Gastrocnemius medialis (tissue), 4 donors: ENCODE measurements at regions of chr20 and their contacts with region 1.

Region 1: GRCh38 chr20:23920417-23921325 is 41.1 kb upstream of the CST5 start:
- DNase-seq: no peak
- ATAC-seq: no peak
- H3K4me3 ChIP-seq: no peak overlapping the region
- H3K27ac ChIP-seq: no peak overlapping the region
- H3K4me1 ChIP-seq: no peaks in the 10 kb centered on the region
- H3K27me3 ChIP-seq: peaks cover 0 to 2% (median 0%) of the 10 kb centered on the region in 3 donors
- CTCF ChIP-seq: no peak
- POLR2A ChIP-seq: no peak

Region 2: GRCh38 chr20:23721962-23722361 is 198.7 kb before region 1 on chr20:
- in situ Hi-C with region 1: no loop called
- intact Hi-C with region 1: no loop called
- DNase-seq: no peak
- ATAC-seq: no peak
- H3K4me3 ChIP-seq: no peak overlapping the region
- H3K27ac ChIP-seq: no peak overlapping the region
- H3K4me1 ChIP-seq: no peaks in the 10 kb centered on the region
- H3K27me3 ChIP-seq: no peaks in the 10 kb centered on the region
- CTCF ChIP-seq: no peak
- POLR2A ChIP-seq: no peak

Region 3: GRCh38 chr20:23937303-23938117 is 16.8 kb after region 1 on chr20:
- in situ Hi-C with region 1: no loop called
- intact Hi-C with region 1: no loop called
- DNase-seq: peak; percentile 11 to 20
- ATAC-seq: peak; percentile 27 to 69
- H3K4me3 ChIP-seq: no peak overlapping the region
- H3K27ac ChIP-seq: no peak overlapping the region
- H3K4me1 ChIP-seq: no peaks in the 10 kb centered on the region
- H3K27me3 ChIP-seq: no peaks in the 10 kb centered on the region
- CTCF ChIP-seq: peak; percentile 15 to 60 (median 55)
- POLR2A ChIP-seq: no peak

Region 4: DNA sequence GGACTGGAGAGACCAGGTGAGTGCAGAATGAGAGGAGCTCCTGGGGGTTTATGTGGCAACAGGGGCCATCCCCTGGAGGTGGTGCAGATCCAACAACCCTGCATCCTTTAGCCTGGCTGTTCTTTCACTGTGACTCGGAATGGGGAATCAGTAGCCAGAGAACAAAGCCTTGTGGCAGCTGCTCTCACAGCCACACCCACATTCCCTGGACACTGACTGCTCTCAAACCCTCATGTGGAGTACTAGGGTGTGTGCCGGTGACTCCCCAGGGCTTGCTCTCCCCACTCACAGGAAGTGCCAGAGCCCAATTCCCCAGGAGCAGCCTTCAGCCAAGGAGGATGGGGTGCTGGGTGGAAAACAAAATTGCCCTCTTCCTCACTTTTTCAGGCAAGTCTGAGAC is 98.1 kb after region 1 on chr20:
- in situ Hi-C with region 1: loop called in 1 of 4 experiments (anchors 25 kb)
- intact Hi-C with region 1: no loop called
- DNase-seq: no peak
- ATAC-seq: no peak
- H3K4me3 ChIP-seq: no peak overlapping the region
- H3K27ac ChIP-seq: no peak overlapping the region
- H3K4me1 ChIP-seq: no peaks in the 10 kb centered on the region
- H3K27me3 ChIP-seq: no peaks in the 10 kb centered on the region
- CTCF ChIP-seq: no peak
- POLR2A ChIP-seq: no peak

Region 5: GRCh38 chr20:24079661-24080412 is 159.2 kb after region 1 on chr20:
- in situ Hi-C with region 1: no loop called
- intact Hi-C with region 1: no loop called
- DNase-seq: no peak
- ATAC-seq: no peak
- H3K4me3 ChIP-seq: no peak overlapping the region
- H3K27ac ChIP-seq: no peak overlapping the region
- H3K4me1 ChIP-seq: no peaks in the 10 kb centered on the region
- H3K27me3 ChIP-seq: no peaks in the 10 kb centered on the region
- CTCF ChIP-seq: no peak
- POLR2A ChIP-seq: no peak

Region 6: DNA sequence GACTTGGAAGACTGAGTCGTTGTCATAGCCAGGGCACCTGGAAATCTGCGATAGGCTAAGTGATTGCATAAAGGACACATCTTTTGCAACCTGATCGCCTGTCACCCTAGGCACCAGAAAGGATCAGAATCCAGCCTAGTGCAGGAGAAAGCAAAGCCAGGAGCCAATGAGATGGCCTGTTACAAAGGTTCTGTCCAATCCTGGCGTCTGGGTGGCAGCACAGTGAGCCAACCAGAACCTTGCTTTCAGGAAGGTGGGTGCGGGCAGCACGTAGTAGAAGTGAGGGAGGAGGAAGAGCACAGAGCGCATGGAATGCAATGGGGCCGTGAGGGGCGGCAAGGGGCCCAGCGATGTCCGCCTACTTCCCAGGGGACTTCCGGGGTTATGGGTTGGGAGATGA is 188.3 kb after region 1 on chr20:
- in situ Hi-C with region 1: no loop called
- intact Hi-C with region 1: no loop called
- DNase-seq: no peak
- ATAC-seq: no peak
- H3K4me3 ChIP-seq: no peak overlapping the region
- H3K27ac ChIP-seq: no peak overlapping the region
- H3K4me1 ChIP-seq: no peaks in the 10 kb centered on the region
- H3K27me3 ChIP-seq: no peaks in the 10 kb centered on the region
- CTCF ChIP-seq: no peak
- POLR2A ChIP-seq: no peak